SK-N-SH (cell line): ENCODE measurements at regions of chr15 and their contacts with region 1.

Region 1: DNA sequence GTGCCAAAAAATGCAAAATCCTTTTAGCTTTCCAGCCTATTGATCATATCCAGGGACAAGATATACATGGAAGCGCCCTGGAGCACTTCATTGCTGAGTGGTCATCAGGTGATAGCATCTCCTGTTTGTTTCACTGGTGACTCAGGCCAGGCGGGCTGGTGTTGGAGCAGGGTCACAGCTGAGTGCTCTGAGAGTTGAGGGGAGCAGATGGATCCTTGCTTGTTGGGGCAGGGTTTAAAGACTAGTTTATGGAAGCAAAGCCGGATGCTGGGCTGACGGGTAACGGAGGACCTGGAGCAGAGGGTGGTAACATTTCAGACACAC is 405.0 kb upstream of the TPM1 start:
- DNase-seq: peak; percentile 77
- H3K4me3 ChIP-seq: no peak overlapping the region
- H3K27ac ChIP-seq: peak overlapping the region; percentile 47 to 87; a peak in 3 of 4 replicates
- H3K4me1 ChIP-seq: peaks cover 15 to 48% of the 10 kb centered on the region in 2 experiments; a peak in 3 of 4 replicates
- H3K27me3 ChIP-seq: no peaks in the 10 kb centered on the region
- CTCF ChIP-seq: no peak
- EP300 ChIP-seq: peak in 1 of 2 experiments; percentile 95; a peak in 3 of 4 replicates
- RAD21 ChIP-seq: peak; percentile 16; the same call in 1 of the 2 replicates

Region 2: DNA sequence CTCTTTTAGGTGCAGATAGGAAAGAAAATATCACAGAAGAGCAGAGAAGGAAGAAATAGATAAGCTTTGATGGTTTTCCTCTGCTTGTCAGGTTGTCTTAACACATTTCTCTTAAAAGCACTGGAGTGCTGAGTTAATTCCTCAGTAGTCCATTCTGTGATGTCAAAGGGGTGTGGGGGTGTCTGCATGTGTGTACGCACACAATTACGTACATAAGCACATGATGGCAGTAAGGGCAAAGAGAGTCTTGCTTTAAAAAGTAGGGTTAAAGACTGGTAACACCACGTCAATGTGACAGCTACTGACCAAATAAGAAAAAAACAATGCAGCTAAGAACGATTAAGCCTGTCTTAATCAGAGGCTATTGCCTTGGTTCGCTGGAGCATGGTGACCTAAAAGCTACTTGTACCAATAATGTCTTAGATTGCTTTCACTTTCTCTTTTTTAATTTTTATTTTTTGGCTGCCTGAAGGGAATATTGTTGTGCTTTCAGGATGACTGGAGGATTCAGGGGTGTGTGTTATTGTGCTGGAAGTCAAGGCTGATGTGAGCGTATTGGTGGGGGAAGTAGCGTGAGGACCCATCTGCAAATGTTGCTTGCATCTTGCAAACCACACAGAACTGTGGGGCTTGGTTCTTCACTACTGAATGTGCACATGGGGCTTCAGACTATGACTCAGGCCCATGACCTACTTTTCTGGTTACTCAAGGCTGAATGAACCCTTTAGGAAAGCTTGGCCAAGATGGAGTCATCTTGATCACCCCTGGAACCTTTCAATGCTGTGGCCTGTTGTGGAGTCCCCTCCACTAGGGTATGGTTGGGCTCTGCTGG is 12.8 kb before region 1 on chr15:
- CTCF ChIA-PET with region 1: interaction called, 5 read pairs
- POLR2A ChIA-PET with region 1: interaction called, 13 read pairs
- DNase-seq: no peak
- H3K4me3 ChIP-seq: peak overlapping the region in 1 of 2 experiments; percentile 44; a peak in 2 of 4 replicates
- H3K27ac ChIP-seq: peak overlapping the region; percentile 82 to 99
- H3K4me1 ChIP-seq: peaks cover 15 to 59% of the 10 kb centered on the region in 2 experiments
- H3K27me3 ChIP-seq: no peaks in the 10 kb centered on the region
- CTCF ChIP-seq: no peak
- EP300 ChIP-seq: no peak
- RAD21 ChIP-seq: no peak